Dendritic cell treated with granulocyte-macrophage colony-stimulating factor and Interleukin-4, amounts not matched to agents 40 ng/mL and 50 ng/mL, for 4 days (primary cell): ENCODE measurements at regions of chr18 and their contacts with region 1.

Region 1: DNA sequence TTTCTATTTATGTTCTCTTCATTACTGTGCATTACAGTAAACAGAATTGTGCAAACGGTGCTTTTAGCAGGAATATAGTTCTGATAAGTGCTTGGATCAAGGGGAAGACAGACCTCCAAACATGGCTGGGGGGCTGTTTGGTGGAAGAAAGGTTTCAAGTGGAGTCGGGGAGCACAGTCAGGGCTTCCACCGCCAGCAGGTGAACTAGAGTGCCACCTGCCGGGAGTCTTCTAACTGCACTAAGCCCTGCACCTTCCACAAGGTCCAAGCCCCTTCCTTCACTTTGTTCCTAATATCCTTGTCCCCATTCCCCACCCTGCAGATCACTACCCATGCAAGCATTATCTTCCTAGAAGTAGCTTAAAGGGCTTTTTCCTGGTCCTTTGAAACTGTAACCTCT is 11.1 kb downstream of the ONECUT2 start:
- H3K4me3 Mint-ChIP-seq: no peak overlapping the region
- H3K27ac Mint-ChIP-seq: no peak overlapping the region
- H3K4me1 Mint-ChIP-seq: peaks cover 4% of the 10 kb centered on the region
- H3K27me3 Mint-ChIP-seq: peaks cover 76% of the 10 kb centered on the region

Region 2: GRCh38 chr18:56869189-56869777 is 577.0 kb before region 1 on chr18:
- intact Hi-C with region 1: loop called (anchors 10 kb)
- H3K4me3 Mint-ChIP-seq: no peak overlapping the region
- H3K27ac Mint-ChIP-seq: no peak overlapping the region
- H3K4me1 Mint-ChIP-seq: peaks cover 5% of the 10 kb centered on the region
- H3K27me3 Mint-ChIP-seq: no peaks in the 10 kb centered on the region

Region 3: GRCh38 chr18:57209713-57210661 is 236.3 kb before region 1 on chr18:
- intact Hi-C with region 1: no loop called
- H3K4me3 Mint-ChIP-seq: no peak overlapping the region
- H3K27ac Mint-ChIP-seq: no peak overlapping the region
- H3K4me1 Mint-ChIP-seq: peaks cover 11% of the 10 kb centered on the region
- H3K27me3 Mint-ChIP-seq: peaks cover 22% of the 10 kb centered on the region